GM10248 (cell line): ENCODE measurements at regions of chr7 and their contacts with region 1.

Region 1: DNA sequence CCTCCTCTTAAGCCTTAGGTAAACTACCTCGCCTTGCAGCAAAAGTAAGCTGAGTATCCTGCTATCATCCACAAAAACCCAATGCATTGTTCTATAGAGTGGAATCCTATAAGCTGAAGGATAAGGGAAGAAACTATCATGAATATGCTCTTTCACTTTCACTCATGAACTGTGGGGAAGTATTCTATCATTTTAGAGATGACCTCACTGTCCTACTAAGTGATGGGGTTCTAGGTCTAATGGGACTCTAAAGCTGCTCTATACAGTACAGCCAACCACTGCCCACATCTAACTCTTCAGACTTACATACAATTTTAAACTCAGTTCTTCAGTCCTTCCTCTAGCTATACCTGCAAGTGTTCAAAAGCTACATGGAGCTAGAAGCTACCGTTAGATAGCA is 16.2 kb downstream of the MKRN1 start:
- DNase-seq: no peak
- CTCF ChIP-seq: no peak

Region 2: DNA sequence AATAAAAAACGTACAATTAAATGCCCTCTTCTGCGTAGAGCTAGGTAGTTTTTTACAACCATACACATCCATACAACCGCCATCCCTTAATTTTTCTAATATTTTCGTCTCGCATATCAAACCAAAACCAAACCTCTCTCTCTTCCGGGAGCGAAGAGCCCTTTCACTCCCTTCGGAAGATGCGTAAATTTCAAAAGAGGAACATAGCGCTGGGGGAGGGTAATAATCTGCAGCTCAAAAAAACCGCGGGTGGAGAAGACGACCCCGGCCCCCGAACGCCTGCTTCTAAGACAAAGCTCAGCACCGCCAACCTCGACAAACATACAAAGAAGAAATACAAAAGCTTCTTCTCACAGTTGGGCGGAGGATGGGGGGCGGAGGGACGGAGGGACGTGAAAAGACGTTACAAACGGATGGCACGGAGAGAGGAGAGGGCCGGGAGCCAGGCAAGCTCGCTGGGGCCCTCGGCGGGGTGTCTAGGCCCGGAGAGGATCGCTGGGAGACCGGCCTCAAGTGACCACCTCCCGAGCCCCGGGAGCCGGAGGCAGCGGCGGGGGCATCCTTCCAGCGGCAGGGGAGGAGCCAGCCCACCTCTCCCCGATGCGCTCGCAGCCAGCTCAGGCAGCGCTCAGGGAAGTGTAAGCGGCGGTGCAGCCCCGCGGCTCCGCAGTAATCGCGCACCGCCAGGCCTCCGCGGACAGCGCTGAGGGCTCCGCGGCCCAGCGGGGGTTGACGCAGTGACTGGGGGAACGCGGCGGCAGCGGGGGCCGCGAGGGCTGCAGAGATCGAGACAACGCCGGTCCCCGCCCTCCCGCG is 15.3 kb after region 1 on chr7:
- CTCF ChIA-PET with region 1: interaction called, 28 read pairs
- POLR2A ChIA-PET with region 1: no interaction called
- DNase-seq: peak; percentile 41
- CTCF ChIP-seq: no peak